GM12878 (cell line): ENCODE measurements at regions of chr4 and their contacts with region 1.

Region 1: GRCh38 chr4:109433205-109434006 is at the start of gene SEC24B:
- DNase-seq: peak; percentile 43
- ATAC-seq: peak; percentile 91
- H3K4me3 ChIP-seq: peak within 1 kb of the TSS; percentile 82
- H3K27ac ChIP-seq: peak within 1 kb of the TSS; percentile 80
- H3K4me1 ChIP-seq: peaks cover 8% of the 10 kb centered on the region; the same call in 1 of the 2 replicates
- H3K27me3 ChIP-seq: no peaks in the 10 kb centered on the region
- CTCF ChIP-seq: peak; percentile 64 to 89 (median 74); a peak in 5 of 6 replicates
- EP300 ChIP-seq: no peak
- POLR2A ChIP-seq: peak; percentile 86
- RAD21 ChIP-seq: peak; percentile 67
- polyA plus RNA-seq, gene SEC24B: 6.4 to 8.1 TPM

Region 2: DNA sequence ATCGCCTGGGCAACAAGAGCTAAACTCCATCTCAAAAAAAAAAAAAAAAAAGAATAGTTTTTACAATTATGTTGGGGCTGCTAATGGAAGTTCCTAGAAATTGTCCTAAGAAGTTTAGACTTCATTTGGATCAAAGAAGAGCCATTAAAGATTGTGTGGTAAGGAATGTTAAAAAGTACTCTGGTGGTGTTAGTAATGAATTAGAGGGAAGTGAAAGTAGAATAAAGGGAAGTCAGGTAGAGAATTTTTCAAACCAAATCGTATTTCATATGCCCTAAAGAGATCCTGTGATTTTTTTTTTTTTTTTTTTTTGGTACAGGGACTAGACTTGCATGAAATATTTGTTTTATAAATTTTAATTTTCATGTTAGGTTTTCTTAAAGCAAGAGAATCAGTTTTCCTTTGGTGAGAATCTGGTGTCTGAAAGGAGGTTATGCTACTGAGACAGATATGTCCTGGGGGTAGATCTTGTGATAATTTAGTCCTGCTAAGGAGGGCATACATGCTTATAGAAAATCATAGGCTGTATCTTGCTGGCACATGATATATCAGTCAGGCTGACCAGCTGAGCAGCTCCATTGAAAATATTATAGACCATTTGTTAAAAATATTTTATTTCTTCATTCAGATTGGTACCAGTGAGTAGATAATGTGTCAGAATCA is 10.9 kb after region 1 on chr4:
- CTCF ChIA-PET with region 1: interaction called, 13 read pairs
- POLR2A ChIA-PET with region 1: interaction called, 3 read pairs
- RAD21 ChIA-PET with region 1: no interaction called
- SMC1A ChIA-PET with region 1: interaction called, 7 read pairs
- in situ Hi-C with region 1: no loop called
- intact Hi-C with region 1: no loop called
- DNase-seq: no peak
- ATAC-seq: peak; percentile 74
- H3K4me3 ChIP-seq: no peak overlapping the region
- H3K27ac ChIP-seq: 0 out of 2 replicates have a peak overlapping the region, but pooled peaks have one; percentile 42
- H3K4me1 ChIP-seq: peaks cover 11% of the 10 kb centered on the region
- H3K27me3 ChIP-seq: no peaks in the 10 kb centered on the region
- CTCF ChIP-seq: no peak
- EP300 ChIP-seq: peak in 1 of 2 experiments; percentile 49; a peak in 1 of 4 replicates
- POLR2A ChIP-seq: no peak
- RAD21 ChIP-seq: no peak

Region 3: DNA sequence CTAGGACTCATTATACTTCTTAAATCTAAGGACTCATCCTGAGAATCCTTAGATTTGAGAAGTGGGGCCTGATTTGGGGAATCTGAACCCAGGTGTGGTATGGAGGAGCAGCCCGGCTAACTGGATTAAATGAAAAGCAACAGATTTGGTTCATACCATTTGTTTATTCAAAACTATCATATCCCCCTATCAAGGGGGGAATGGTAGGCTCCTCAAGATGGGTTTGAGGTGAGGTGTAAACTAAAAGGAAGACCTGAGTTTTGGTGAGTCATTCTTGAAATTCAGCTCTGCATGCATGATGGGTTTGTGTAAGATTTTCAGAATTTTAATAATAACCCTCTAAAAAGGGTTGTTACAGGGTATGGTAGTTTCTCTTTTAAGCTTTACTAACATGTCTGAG is 216.5 kb after region 1 on chr4:
- CTCF ChIA-PET with region 1: no interaction called
- POLR2A ChIA-PET with region 1: no interaction called
- RAD21 ChIA-PET with region 1: interaction called, 3 read pairs
- SMC1A ChIA-PET with region 1: interaction called, 3 read pairs
- in situ Hi-C with region 1: no loop called
- intact Hi-C with region 1: loop called (anchors 5 kb)
- DNase-seq: peak; percentile 56
- ATAC-seq: peak; percentile 93
- H3K4me3 ChIP-seq: peak overlapping the region; percentile 13; the same call in 1 of the 2 replicates
- H3K27ac ChIP-seq: peak overlapping the region; percentile 58
- H3K4me1 ChIP-seq: peaks cover 28% of the 10 kb centered on the region
- H3K27me3 ChIP-seq: no peaks in the 10 kb centered on the region
- CTCF ChIP-seq: no peak
- EP300 ChIP-seq: no peak
- POLR2A ChIP-seq: no peak
- RAD21 ChIP-seq: no peak

Region 4: GRCh38 chr4:109708990-109709389 is 275.6 kb after region 1 on chr4:
- CTCF ChIA-PET with region 1: interaction called, 3 read pairs
- POLR2A ChIA-PET with region 1: interaction called, 13 read pairs
- RAD21 ChIA-PET with region 1: interaction called, 7 read pairs
- SMC1A ChIA-PET with region 1: no interaction called
- in situ Hi-C with region 1: no loop called
- intact Hi-C with region 1: no loop called
- DNase-seq: peak; percentile 15
- ATAC-seq: peak; percentile 93
- H3K4me3 ChIP-seq: no peak overlapping the region
- H3K27ac ChIP-seq: no peak overlapping the region
- H3K4me1 ChIP-seq: peaks cover 5% of the 10 kb centered on the region; the same call in 1 of the 2 replicates
- H3K27me3 ChIP-seq: no peaks in the 10 kb centered on the region
- CTCF ChIP-seq: no peak
- EP300 ChIP-seq: no peak
- POLR2A ChIP-seq: no peak
- RAD21 ChIP-seq: no peak

Region 5: DNA sequence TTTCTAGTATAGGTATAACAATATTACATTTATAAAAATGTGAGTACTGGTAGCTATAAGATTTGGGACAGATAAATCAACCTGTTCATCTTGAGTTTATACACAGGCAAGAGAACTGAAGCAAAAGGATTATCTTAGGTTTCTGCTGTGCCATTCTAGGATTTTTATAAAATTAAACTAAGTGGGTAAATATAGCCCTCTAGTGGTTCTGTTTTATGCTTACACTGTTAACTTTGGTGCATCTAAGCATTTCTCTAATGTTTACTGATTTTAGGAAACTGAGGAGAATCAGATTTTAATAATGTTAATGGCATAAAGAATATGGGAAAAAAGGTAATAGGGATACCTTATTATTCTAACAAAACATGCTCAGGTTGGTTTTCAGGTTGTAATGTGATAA is 393.3 kb after region 1 on chr4:
- CTCF ChIA-PET with region 1: interaction called, 36 read pairs
- POLR2A ChIA-PET with region 1: no interaction called
- RAD21 ChIA-PET with region 1: interaction called, 7 read pairs
- SMC1A ChIA-PET with region 1: interaction called, 3 read pairs
- in situ Hi-C with region 1: no loop called
- intact Hi-C with region 1: no loop called
- DNase-seq: no peak
- ATAC-seq: peak; percentile 80
- H3K4me3 ChIP-seq: no peak overlapping the region
- H3K27ac ChIP-seq: no peak overlapping the region
- H3K4me1 ChIP-seq: no peaks in the 10 kb centered on the region
- H3K27me3 ChIP-seq: no peaks in the 10 kb centered on the region
- CTCF ChIP-seq: peak; percentile 22 to 54 (median 40); a peak in 4 of 6 replicates
- EP300 ChIP-seq: no peak
- POLR2A ChIP-seq: no peak
- RAD21 ChIP-seq: peak; percentile 69

Region 6: GRCh38 chr4:110193822-110194761 is 760.7 kb after region 1 on chr4:
- CTCF ChIA-PET with region 1: no interaction called
- POLR2A ChIA-PET with region 1: no interaction called
- RAD21 ChIA-PET with region 1: no interaction called
- SMC1A ChIA-PET with region 1: no interaction called
- in situ Hi-C with region 1: loop called (anchors 25 kb)
- intact Hi-C with region 1: loop called (anchors 10 kb)
- DNase-seq: peak; percentile 95
- ATAC-seq: peak; percentile 74
- H3K4me3 ChIP-seq: no peak overlapping the region
- H3K27ac ChIP-seq: peak overlapping the region; percentile 75
- H3K4me1 ChIP-seq: peaks cover 19% of the 10 kb centered on the region
- H3K27me3 ChIP-seq: no peaks in the 10 kb centered on the region
- CTCF ChIP-seq: no peak
- EP300 ChIP-seq: no peak
- POLR2A ChIP-seq: peak; percentile 89
- RAD21 ChIP-seq: no peak